AG04449 (cell line): ENCODE measurements at regions of chr22 and their contacts with region 1.

Region 1: GRCh38 chr22:45994491-45995404 is 17.8 kb upstream of the WNT7B start:
- DNase-seq: no peak
- H3K4me3 ChIP-seq: no peak overlapping the region
- CTCF ChIP-seq: peak; percentile 97

Region 2: DNA sequence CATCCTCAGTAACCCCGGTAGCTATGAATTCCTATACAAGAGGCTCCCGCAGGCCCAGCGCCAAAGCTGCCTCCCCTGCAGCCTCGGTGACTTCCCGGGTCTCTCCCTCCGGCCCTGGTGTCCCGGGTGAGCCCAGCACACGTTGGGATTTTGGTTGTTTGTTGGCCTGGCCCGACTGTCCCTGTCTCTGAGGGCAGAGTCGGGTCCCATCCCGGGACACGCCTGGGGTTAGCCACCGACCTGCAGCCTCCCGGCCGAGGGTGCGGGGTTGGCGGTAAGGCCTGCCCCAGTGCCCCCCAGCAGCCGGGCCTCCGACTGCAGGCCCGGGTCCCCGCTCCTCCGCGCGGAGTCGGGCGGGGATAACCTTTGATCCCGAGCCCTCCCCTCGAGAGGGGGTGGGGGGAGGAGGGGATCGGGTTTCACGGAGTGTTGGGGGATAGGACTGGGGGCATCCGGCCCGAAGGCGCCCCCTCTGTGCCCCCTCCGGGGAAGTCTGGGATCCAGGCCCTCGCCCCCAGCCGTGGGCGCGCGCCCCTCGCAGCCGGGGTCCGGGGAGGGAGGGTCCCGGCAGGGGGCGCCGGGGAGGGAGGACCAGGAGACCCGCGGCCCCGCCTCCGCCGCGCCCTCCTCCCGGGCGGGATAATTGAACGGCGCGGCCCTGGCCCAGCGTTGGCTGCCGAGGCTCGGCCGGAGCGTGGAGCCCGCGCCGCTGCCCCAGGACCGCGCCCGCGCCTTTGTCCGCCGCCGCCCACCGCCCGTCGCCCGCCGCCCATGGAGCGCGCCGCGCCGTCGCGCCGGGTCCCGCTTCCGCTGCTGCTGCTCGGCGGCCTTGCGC is 492.3 kb before region 1 on chr22 and contains the start of gene FBLN1:
- CTCF ChIA-PET with region 1: no interaction called
- POLR2A ChIA-PET with region 1: no interaction called
- DNase-seq: no peak
- H3K4me3 ChIP-seq: peak within 1 kb of the TSS; percentile 87
- CTCF ChIP-seq: peak; percentile 32

Region 3: DNA sequence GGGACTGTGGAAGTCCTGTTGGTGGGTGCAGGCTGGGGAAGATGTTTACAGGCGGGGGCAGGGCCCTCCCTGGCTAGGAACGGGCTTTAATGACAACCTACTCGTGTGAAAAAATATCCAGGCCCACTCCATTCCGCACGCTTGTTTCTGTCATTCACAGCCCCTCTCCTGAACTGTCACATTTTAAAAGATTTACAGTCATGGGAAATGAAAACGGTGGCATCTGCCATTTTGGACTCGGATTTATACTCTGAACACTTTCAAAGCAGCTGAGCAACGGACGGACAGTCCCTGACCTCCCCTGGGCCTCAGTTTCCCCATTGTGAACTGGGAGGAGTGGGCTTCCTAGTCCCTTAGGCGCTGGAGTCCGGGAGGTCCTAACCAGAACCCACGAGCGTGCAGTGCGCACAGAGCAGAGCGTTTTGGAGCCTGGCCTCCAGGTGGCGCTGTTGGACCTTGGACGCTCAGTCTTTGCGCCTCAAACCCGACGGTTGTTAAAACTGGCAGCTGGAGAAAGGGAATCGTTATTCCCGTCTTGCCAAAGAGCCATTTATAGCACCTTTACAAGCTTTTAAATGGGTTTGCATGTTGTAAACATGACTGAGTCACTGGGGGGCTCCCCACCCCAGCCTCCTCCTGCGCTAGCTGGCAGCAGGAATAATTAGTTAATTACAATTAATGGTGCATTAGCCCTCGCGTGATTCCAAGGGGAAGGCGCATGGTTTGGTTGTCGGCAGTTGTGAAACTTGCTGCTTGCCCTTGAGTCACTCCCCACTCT is 416.8 kb before region 1 on chr22:
- CTCF ChIA-PET with region 1: interaction called, 12 read pairs
- POLR2A ChIA-PET with region 1: no interaction called
- DNase-seq: no peak
- H3K4me3 ChIP-seq: no peak overlapping the region
- CTCF ChIP-seq: peak; percentile 95

Region 4: DNA sequence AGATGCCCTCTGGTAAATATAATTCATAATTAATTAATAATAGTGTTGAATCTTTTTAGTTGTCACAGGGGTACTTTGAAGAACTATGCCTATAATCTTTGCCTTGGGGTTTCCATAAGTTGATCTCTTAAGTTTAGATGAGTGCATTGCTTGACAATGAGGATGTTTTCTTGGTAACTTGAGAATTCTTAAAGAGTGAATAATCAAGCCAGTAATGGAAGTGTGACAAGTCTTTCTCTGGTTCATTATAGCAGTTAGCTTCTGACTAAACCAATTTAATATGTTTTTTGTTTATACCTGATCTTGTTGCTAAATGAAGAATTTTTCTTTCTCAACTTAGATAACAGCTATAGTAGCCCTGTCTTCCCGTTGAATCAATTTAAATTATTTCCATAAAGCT is 277.0 kb before region 1 on chr22:
- CTCF ChIA-PET with region 1: no interaction called
- POLR2A ChIA-PET with region 1: no interaction called
- DNase-seq: peak; percentile 50
- H3K4me3 ChIP-seq: no peak overlapping the region
- CTCF ChIP-seq: no peak

Region 5: GRCh38 chr22:46013460-46014416 is 19.0 kb after region 1 on chr22:
- CTCF ChIA-PET with region 1: interaction called, 155 read pairs
- POLR2A ChIA-PET with region 1: interaction called, 3 read pairs
- DNase-seq: peak; percentile 76
- H3K4me3 ChIP-seq: peak overlapping the region; percentile 73
- CTCF ChIP-seq: peak; percentile 79

Region 6: GRCh38 chr22:46071451-46072109 is 76.8 kb after region 1 on chr22:
- CTCF ChIA-PET with region 1: interaction called, 33 read pairs
- POLR2A ChIA-PET with region 1: interaction called, 10 read pairs
- DNase-seq: peak; percentile 53
- H3K4me3 ChIP-seq: peak overlapping the region; percentile 77
- CTCF ChIP-seq: no peak

Region 7: GRCh38 chr22:46108564-46109473 is 114.1 kb after region 1 on chr22:
- CTCF ChIA-PET with region 1: interaction called, 147 read pairs
- POLR2A ChIA-PET with region 1: interaction called, 5 read pairs
- DNase-seq: no peak
- H3K4me3 ChIP-seq: no peak overlapping the region
- CTCF ChIP-seq: no peak

Region 8: DNA sequence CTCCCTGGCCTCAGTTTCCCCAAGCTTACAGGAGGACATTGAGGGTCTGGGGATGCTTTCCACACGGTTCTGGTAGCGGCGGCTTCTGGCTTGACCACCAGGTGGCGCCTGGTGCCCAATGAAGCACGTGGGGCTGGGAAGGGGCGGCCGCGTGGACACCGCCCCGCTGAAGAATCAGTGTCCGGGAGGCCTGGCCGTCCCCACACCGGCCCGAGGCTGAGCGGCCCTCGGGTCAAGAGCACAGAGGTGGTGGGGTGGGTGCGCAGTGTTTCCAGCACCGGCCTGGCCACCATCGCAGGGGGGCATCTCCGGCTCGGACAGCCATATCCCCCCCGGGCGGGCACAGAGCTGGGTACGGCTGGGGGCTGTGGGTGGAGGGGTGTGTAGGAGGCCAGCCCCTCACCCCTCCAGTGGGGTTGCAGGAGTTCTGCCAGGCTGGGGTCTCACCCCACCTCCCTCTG is 127.8 kb after region 1 on chr22:
- CTCF ChIA-PET with region 1: interaction called, 147 read pairs
- POLR2A ChIA-PET with region 1: interaction called, 21 read pairs
- DNase-seq: no peak
- H3K4me3 ChIP-seq: no peak overlapping the region
- CTCF ChIP-seq: peak; percentile 91

Region 9: DNA sequence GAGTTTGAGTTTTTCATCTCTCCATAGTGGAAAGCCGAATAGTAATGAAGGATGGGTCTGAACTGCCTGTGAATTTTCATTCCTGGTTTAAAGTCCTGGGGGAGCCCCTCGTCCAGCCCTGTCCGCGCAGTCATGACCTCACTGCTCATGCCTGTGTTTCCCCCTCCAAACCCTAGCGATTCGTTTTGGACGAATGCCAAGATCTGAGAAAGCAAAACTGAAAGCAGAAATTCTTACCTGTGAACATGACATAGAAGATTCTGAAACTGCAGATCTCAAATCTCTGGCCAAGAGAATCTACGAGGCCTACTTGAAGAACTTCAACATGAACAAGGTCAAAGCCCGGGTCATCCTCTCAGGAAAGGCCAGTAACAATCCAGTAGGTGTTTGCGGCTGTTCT is 224.9 kb after region 1 on chr22:
- CTCF ChIA-PET with region 1: no interaction called
- POLR2A ChIA-PET with region 1: no interaction called
- DNase-seq: no peak
- H3K4me3 ChIP-seq: no peak overlapping the region
- CTCF ChIP-seq: no peak

Region 10: DNA sequence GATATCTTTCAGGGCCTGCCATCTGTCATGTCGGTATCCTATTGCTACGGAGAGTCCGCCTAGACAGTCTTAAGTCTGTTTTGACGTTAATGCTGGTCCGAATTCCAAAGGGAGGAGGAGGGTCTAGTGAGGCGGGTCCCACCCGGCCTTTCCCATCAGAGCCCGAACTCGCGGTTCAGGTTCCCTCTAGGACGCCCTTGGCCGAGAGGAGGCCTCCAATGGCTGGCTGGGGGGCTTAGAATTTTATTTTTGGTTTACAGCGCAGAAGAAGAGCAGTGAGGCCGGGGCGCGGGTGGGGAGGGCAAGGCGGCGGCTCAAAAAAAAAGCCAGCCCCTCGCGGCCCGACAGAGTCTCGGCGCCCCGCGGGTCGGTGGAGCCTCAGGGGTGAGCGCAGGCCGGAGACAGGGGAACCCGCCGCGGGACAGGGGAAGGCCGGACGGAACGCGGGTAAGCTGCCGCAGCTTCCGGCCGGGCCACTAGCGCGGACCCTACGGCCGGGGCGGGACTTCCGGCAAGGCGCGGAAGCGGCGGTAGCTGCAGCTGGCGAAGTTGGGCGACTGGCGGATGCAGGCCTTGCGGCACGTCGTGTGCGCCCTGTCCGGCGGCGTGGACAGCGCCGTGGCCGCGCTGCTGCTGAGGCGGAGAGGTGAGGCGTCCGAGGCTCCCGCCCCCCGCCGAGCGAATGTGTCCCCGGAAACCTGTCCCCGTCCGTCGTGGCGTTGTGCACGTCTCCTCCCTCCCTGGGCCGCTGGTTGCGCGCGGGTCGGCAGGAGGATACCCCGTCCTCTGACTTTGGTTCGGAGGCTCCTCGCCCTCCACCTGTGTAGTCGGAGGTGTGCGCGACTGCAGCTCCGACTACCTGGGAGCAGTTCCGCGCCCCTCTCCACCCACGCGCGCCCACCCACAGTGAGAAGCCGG is 340.7 kb after region 1 on chr22 and contains the start of gene TRMU:
- CTCF ChIA-PET with region 1: interaction called, 11 read pairs
- POLR2A ChIA-PET with region 1: no interaction called
- DNase-seq: peak; percentile 29
- H3K4me3 ChIP-seq: peak within 1 kb of the TSS; percentile 90
- CTCF ChIP-seq: no peak

Region 11: GRCh38 chr22:46377566-46378425 is 383.0 kb after region 1 on chr22:
- CTCF ChIA-PET with region 1: no interaction called
- POLR2A ChIA-PET with region 1: no interaction called
- DNase-seq: no peak
- H3K4me3 ChIP-seq: no peak overlapping the region
- CTCF ChIP-seq: no peak